ENCODE measurements at regions of chr10 and their contacts with region 1.

Region 1: DNA sequence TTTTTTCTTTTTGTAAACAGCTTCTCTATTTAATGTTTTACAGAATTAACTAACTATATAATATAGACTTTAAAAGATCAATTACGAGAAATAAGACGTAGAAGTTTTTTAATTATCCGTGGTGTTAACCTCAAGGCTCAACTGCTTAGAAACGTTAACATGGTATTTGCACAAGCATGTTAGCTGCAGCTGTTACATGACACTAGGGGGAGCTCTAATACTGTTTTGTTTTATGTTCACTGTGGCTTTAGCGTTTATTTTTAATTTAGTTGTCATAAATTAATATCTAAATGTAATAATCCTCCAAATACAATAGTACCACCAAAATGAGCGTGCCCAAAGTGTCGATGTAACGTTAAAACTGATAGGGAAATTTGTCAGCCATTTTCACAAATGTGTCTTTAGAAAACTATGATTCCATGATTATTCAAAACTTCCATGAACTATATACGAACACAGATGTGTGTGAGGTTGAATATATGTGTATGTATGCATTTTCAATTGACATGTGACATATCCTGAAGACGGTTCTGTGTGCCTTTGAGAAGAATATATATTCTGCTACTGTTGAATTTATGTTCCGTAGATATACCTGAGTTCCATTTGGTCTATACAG is 828.8 kb upstream of the MBL2 start:
- DNase-seq: no peak
- ATAC-seq: no peak
- H3K4me3 ChIP-seq: no peak overlapping the region
- H3K27ac ChIP-seq: no peak overlapping the region
- H3K4me1 ChIP-seq: no peaks in the 10 kb centered on the region
- H3K27me3 ChIP-seq: peaks cover 0 to 2% (median 0%) of the 10 kb centered on the region in 7 donors
- CTCF ChIP-seq: peak; percentile 56 to 87 (median 79)

Region 2: DNA sequence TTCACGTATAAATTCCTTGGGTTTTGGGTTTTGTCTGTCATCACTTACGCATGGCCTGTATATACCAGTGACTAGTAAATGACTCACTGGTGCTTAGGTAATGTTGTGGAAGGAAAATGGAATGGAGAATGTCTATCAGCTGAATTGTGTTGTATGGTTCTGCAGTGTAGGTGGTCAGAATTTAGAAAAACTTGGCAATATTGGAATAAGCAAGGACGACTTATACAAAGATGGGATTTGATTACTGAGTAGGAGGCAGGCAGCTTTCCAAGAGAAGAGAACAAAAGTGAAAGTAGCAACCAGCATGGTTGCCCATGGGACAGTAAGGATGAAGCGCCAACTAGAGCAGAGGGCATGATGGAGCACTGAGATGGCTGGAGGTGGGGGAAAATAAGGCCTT is 1733.4 kb before region 1 on chr10:
- intact Hi-C with region 1: no loop called
- DNase-seq: no peak
- ATAC-seq: peak in 1 of 8 donors; percentile 33
- H3K4me3 ChIP-seq: no peak overlapping the region
- H3K27ac ChIP-seq: peak overlapping the region in 1 of 10 donors; percentile 42
- H3K4me1 ChIP-seq: peaks cover 0 to 4% (median 0%) of the 10 kb centered on the region in 9 donors
- H3K27me3 ChIP-seq: no peaks in the 10 kb centered on the region
- CTCF ChIP-seq: no peak

Region 3: GRCh38 chr10:52940921-52941320 is 660.4 kb before region 1 on chr10:
- intact Hi-C with region 1: no loop called
- DNase-seq: no peak
- ATAC-seq: no peak
- H3K4me3 ChIP-seq: no peak overlapping the region
- H3K27ac ChIP-seq: no peak overlapping the region
- H3K4me1 ChIP-seq: no peaks in the 10 kb centered on the region
- H3K27me3 ChIP-seq: no peaks in the 10 kb centered on the region
- CTCF ChIP-seq: no peak

Region 4: GRCh38 chr10:53387562-53387961 is 213.8 kb before region 1 on chr10:
- intact Hi-C with region 1: no loop called
- DNase-seq: no peak
- ATAC-seq: no peak
- H3K4me3 ChIP-seq: no peak overlapping the region
- H3K27ac ChIP-seq: no peak overlapping the region
- H3K4me1 ChIP-seq: no peaks in the 10 kb centered on the region
- H3K27me3 ChIP-seq: no peaks in the 10 kb centered on the region
- CTCF ChIP-seq: no peak

Region 5: DNA sequence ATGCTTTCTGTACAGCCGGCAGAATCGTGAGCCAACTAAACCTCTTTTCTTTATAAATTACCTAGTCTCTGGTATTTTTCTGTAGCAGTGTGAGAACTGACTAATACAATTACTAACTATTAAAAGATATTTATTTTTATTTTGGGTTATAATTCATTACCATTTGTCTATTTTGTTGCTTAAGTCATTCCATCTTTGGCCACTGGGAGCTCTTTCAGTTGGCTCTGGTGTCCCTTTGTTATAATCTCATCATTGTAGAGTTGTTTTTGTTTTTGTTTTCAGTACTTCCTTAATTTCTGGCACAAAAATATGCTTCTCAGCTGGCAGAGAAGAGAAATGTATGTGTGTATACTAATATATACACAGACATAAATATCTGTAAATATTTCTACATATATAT is 20.9 kb before region 1 on chr10:
- intact Hi-C with region 1: loop called in 1 of 10 experiments (anchors 1 kb)
- DNase-seq: no peak
- ATAC-seq: no peak
- H3K4me3 ChIP-seq: no peak overlapping the region
- H3K27ac ChIP-seq: no peak overlapping the region
- H3K4me1 ChIP-seq: no peaks in the 10 kb centered on the region
- H3K27me3 ChIP-seq: no peaks in the 10 kb centered on the region
- CTCF ChIP-seq: no peak

Region 6: DNA sequence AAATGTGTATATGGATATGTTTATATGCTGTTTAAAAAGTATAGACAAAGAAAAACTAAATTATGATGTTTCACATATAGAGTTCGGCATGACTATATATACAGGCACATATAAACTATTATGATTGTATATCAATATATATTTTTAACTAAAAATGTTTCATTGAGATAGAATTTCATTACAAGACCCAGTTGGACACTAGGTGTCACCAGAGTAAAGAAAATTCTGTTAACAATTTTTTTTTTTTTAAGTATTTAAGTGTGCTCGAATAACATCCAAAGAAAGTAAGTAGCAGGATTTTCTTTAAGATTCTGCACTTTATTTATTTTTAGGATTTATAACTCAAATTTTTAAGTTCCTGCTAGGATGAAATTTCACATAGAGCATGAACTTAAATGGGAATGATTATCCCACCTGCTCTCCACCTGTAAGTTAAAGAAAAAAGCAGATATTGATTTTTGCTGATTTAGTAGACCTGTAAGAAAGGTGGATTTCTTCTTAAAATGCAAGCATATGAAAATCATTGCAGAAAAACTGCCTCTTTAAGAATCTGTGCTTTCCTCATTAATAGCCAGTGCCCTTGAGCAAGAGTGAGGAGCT is 238.2 kb after region 1 on chr10:
- intact Hi-C with region 1: loop called in 1 of 10 experiments (anchors 10 kb)
- DNase-seq: no peak
- ATAC-seq: no peak
- H3K4me3 ChIP-seq: no peak overlapping the region
- H3K27ac ChIP-seq: no peak overlapping the region
- H3K4me1 ChIP-seq: no peaks in the 10 kb centered on the region
- H3K27me3 ChIP-seq: no peaks in the 10 kb centered on the region
- CTCF ChIP-seq: peak in 8 of 9 donors; percentile 11 to 47 (median 34)

Region 7: GRCh38 chr10:54402576-54402975 is 801.2 kb after region 1 on chr10:
- intact Hi-C with region 1: loop called in 1 of 10 experiments (anchors 10 kb)
- DNase-seq: no peak
- ATAC-seq: no peak
- H3K4me3 ChIP-seq: no peak overlapping the region
- H3K27ac ChIP-seq: no peak overlapping the region
- H3K4me1 ChIP-seq: no peaks in the 10 kb centered on the region
- H3K27me3 ChIP-seq: peaks cover 0 to 3% (median 0%) of the 10 kb centered on the region in 7 donors
- CTCF ChIP-seq: peak in 5 of 9 donors; percentile 29 to 45 (median 35)

Measured in heart right ventricle (tissue), 16 donors.